HCT116 (cell line): ENCODE measurements at regions of chr4 and their contacts with region 1.

Region 1: GRCh38 chr4:82721819-82722423 is 76.7 kb downstream of the SCD5 start:
- DNase-seq: peak; percentile 10
- ATAC-seq: peak; percentile 99
- H3K4me3 ChIP-seq: no peak overlapping the region
- H3K27ac ChIP-seq: no peak overlapping the region
- H3K4me1 ChIP-seq: peaks cover 0 to 1% of the 10 kb centered on the region in 2 experiments; a peak in 1 of 4 replicates
- H3K27me3 ChIP-seq: no peaks in the 10 kb centered on the region
- CTCF ChIP-seq: peak; percentile 37 to 74 (median 63); a peak in 5 of 6 replicates
- POLR2A ChIP-seq: no peak
- RAD21 ChIP-seq: peak; percentile 60

Region 2: DNA sequence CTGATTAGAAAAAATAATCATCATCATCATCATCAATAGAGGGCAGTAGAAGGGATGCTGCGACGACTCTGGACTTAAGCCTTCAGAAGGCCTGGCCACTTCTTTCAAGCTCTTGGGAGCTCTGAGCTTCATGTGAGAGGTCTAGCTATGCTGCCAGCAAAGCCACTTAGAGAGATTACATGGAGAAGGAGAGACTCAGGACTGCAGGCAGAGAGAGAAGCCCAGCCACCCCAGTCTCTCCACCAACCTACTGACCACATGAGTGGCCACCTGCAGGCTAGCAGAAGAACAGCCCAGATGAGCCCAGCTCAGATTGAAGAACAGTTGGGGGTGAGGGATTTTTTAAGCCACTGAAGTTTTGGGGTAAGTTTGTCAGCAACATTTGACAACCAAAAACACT is 143.0 kb before region 1 on chr4:
- CTCF ChIA-PET with region 1: no interaction called
- POLR2A ChIA-PET with region 1: no interaction called
- RAD21 ChIA-PET with region 1: no interaction called
- intact Hi-C with region 1: no loop called
- DNase-seq: peak; percentile 19
- ATAC-seq: peak; percentile 100
- H3K4me3 ChIP-seq: no peak overlapping the region
- H3K27ac ChIP-seq: no peak overlapping the region
- H3K4me1 ChIP-seq: no peaks in the 10 kb centered on the region
- H3K27me3 ChIP-seq: no peaks in the 10 kb centered on the region
- CTCF ChIP-seq: peak; percentile 53 to 65 (median 60)
- POLR2A ChIP-seq: no peak
- RAD21 ChIP-seq: no peak; the same call in 1 of the 2 replicates

Region 3: DNA sequence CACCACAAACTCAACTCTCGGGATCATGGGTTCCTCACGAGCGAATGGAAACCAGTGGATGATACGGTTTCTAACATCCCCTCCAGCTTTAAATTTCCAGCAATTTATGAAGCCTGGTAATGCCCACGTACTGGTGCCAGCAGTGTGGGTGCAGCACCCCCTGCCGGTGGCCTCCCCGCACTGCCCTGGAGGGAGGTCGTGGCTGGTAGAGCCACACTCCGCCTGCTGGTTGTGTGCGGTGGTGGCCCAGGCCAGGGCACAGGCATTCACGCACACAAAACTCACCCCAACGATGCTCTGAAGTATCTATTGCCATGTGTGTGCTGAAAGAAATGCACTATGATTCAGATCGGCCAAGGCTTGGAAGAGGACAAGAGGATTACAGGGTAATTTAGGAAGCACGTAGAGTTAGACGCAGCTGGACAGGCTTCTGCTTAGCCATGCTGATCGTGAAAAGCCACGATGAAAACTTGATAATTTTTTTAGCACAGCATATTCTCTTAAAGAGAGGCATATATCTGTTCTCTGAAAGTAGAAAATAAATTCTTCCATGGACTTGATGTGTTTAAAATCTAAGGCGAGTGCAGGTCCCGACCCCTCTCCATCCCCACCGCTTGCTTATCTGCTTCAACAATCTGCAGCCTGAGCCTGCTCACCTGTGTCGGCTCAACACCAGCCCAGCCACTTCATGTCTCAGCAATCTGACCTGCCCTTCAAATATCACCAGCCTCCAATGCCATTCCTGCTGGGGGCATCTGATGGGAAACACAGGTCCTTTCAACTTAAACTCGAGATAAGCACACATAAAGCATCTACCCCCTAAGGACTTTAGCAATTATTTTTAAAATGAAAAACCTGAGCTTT is 17.6 kb after region 1 on chr4:
- CTCF ChIA-PET with region 1: interaction called, 11 read pairs
- POLR2A ChIA-PET with region 1: no interaction called
- RAD21 ChIA-PET with region 1: no interaction called
- intact Hi-C with region 1: no loop called
- DNase-seq: peak; percentile 31
- ATAC-seq: peak; percentile 100
- H3K4me3 ChIP-seq: no peak overlapping the region
- H3K27ac ChIP-seq: no peak overlapping the region
- H3K4me1 ChIP-seq: peaks cover 3 to 9% of the 10 kb centered on the region in 2 experiments; a peak in 2 of 4 replicates
- H3K27me3 ChIP-seq: no peaks in the 10 kb centered on the region
- CTCF ChIP-seq: peak; percentile 98 to 100 (median 100)
- POLR2A ChIP-seq: no peak
- RAD21 ChIP-seq: peak; percentile 89

Region 4: GRCh38 chr4:82758701-82759685 is 37.1 kb after region 1 on chr4:
- CTCF ChIA-PET with region 1: no interaction called
- POLR2A ChIA-PET with region 1: no interaction called
- RAD21 ChIA-PET with region 1: no interaction called
- intact Hi-C with region 1: no loop called
- DNase-seq: no peak
- ATAC-seq: no peak
- H3K4me3 ChIP-seq: no peak overlapping the region
- H3K27ac ChIP-seq: no peak overlapping the region
- H3K4me1 ChIP-seq: no peaks in the 10 kb centered on the region; a peak in 1 of 4 replicates
- H3K27me3 ChIP-seq: no peaks in the 10 kb centered on the region
- CTCF ChIP-seq: no peak
- POLR2A ChIP-seq: no peak
- RAD21 ChIP-seq: no peak

Region 5: DNA sequence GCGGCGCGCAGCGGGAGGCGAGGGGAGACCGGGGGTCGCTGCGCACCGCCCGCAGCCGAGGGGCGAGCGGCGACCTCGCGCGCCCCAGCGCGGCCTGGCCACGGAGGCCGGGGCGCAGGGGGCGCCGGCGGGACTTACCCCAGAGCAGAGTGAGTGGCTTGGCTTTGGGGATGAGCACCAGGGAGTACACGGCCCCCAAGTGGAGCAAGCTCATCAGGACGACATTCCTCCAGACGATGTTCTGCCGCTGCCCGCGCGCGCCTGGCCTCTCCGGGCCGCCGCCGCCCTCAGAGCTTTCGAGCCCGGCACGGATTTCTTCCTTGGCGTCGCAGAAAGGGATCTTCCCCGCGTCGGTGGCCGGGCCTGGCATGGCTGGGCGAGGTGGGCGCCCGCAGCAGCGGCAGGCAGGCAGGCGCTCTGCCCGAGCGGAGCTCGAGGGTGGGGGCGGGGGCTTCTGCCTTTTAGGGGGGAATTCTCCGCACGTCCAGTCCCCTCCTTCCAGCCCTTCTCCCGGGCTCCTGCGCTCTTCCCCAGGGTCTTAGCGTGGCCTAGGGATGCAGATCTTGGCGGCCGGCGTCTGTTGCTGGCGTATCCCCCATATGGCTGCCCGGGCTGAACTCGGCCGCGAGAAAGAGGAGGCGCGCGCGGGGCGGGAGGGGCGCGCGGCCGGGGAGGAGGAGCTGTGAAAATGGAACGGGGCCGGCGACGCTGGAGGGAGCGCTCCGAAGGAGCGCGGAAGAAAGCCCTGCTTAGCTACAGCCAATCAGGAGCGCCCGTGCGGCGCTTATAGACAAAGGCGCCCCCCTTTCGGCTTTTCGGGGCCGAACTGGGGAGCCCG is 76.5 kb after region 1 on chr4 and contains the start of gene SCD5:
- CTCF ChIA-PET with region 1: interaction called, 3 read pairs
- POLR2A ChIA-PET with region 1: no interaction called
- RAD21 ChIA-PET with region 1: no interaction called
- intact Hi-C with region 1: loop called (anchors 5 kb)
- DNase-seq: peak; percentile 55
- ATAC-seq: peak; percentile 94
- H3K4me3 ChIP-seq: peak within 1 kb of the TSS; percentile 64 to 80
- H3K27ac ChIP-seq: peak within 1 kb of the TSS; percentile 15; the same call in 1 of the 2 replicates
- H3K4me1 ChIP-seq: peaks cover 13 to 25% of the 10 kb centered on the region in 2 experiments; a peak in 3 of 4 replicates
- H3K27me3 ChIP-seq: no peaks in the 10 kb centered on the region
- CTCF ChIP-seq: no peak
- POLR2A ChIP-seq: no peak
- RAD21 ChIP-seq: no peak
- total RNA-seq, gene SCD5: 21.7 TPM